Naive thymus-derived CD4-positive, alpha-beta T cell (primary cell): ENCODE measurements at regions of chr10 and their contacts with region 1.

Region 1: GRCh38 chr10:59906417-59907202 is at the start of gene CCDC6:
- DNase-seq: peak; percentile 87 to 92 (median 91)
- ATAC-seq: peak; percentile 92
- H3K4me3 ChIP-seq: peak within 1 kb of the TSS; percentile 72
- H3K4me3 Mint-ChIP-seq: peak within 1 kb of the TSS; percentile 91 to 99 (median 96)
- H3K27ac ChIP-seq: peak within 1 kb of the TSS; percentile 85
- H3K27ac Mint-ChIP-seq: peak within 1 kb of the TSS; percentile 92 to 98 (median 97)
- H3K4me1 ChIP-seq: peaks cover 22 to 36% of the 10 kb centered on the region in 2 donors
- H3K4me1 Mint-ChIP-seq: peaks cover 47 to 71% (median 64%) of the 10 kb centered on the region in 7 donors
- H3K27me3 ChIP-seq: no peaks in the 10 kb centered on the region
- H3K27me3 Mint-ChIP-seq: no peaks in the 10 kb centered on the region
- total RNA-seq, gene CCDC6: 19.7 to 34.3 (median 21.4) TPM

Region 2: GRCh38 chr10:58268870-58269605 is 1637.6 kb before region 1 on chr10 and contains the start of gene CISD1:
- CTCF ChIA-PET with region 1: no interaction called
- POLR2A ChIA-PET with region 1: interaction called, 7 read pairs
- intact Hi-C with region 1: loop called (anchors 1 to 10 kb)
- DNase-seq: peak; percentile 84 to 96 (median 95)
- ATAC-seq: peak; percentile 69
- H3K4me3 ChIP-seq: peak within 1 kb of the TSS; percentile 73
- H3K4me3 Mint-ChIP-seq: peak within 1 kb of the TSS; percentile 89 to 99 (median 98)
- H3K27ac ChIP-seq: peak within 1 kb of the TSS; percentile 77
- H3K27ac Mint-ChIP-seq: peak within 1 kb of the TSS; percentile 91 to 97 (median 96)
- H3K4me1 ChIP-seq: peaks cover 18 to 20% of the 10 kb centered on the region in 2 donors
- H3K4me1 Mint-ChIP-seq: peaks cover 11 to 50% (median 40%) of the 10 kb centered on the region in 7 donors
- H3K27me3 ChIP-seq: no peaks in the 10 kb centered on the region
- H3K27me3 Mint-ChIP-seq: peaks cover 0 to 2% (median 0%) of the 10 kb centered on the region in 5 donors
- total RNA-seq, gene CISD1: 5.1 to 45.7 (median 9.2) TPM

Region 3: DNA sequence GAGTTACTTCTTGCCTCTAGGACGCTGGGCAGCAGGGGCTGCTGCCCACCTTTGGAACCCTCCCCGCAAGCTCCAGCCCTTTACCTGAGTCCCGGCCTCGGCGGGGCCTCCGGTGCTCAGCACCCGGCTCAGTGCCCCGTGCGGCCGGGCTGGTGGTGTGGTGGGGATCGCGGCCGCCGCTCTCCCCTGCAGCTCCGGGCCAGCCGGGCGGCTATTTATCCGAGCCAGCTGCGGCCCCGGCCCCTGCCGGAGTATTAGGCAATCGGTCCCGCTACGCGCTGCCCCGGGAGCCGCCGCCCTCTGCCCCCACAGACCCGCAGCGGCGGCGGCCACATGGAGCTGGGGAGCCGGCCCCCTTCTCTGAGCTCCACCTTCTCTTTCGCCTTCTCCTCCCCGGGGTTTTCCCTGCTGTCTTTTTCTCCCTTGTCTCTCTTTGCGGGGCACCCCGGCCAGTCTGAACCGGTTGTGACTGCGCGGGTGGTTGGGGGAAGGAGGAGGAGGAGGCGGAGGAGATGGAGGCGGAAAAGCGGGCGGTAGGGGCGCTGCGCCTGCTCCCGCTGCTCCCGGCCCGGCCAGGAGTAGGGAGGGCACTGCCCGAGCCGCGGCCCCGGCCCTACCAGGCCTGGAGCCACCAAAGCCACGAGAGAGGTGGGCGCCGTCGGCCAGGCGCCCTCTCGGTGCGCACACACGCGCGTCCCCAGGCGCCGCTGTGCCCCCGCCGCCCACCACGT is 197.1 kb before region 1 on chr10 and contains the start of gene SLC16A9:
- CTCF ChIA-PET with region 1: no interaction called
- POLR2A ChIA-PET with region 1: no interaction called
- intact Hi-C with region 1: loop called in 1 of 2 experiments (anchors 1 kb)
- DNase-seq: peak in 2 of 9 donors; percentile 1 to 75
- ATAC-seq: peak; percentile 60
- H3K4me3 ChIP-seq: no peak within 1 kb of the TSS
- H3K4me3 Mint-ChIP-seq: peak within 1 kb of the TSS in 8 of 10 donors; percentile 2 to 86 (median 48)
- H3K27ac ChIP-seq: no peak within 1 kb of the TSS
- H3K27ac Mint-ChIP-seq: peak within 1 kb of the TSS in 1 of 9 donors; percentile 34
- H3K4me1 ChIP-seq: no peaks in the 10 kb centered on the region
- H3K4me1 Mint-ChIP-seq: peaks cover 0 to 13% (median 0%) of the 10 kb centered on the region in 7 donors
- H3K27me3 ChIP-seq: no peaks in the 10 kb centered on the region
- H3K27me3 Mint-ChIP-seq: peaks cover 67 to 77% (median 70%) of the 10 kb centered on the region in 5 donors
- total RNA-seq, gene SLC16A9: 1.5 TPM in 1 of 5 experiments, not detected in the others

Region 4: GRCh38 chr10:59865101-59865500 is 41.5 kb before region 1 on chr10:
- CTCF ChIA-PET with region 1: no interaction called
- POLR2A ChIA-PET with region 1: interaction called, 4 read pairs
- intact Hi-C with region 1: loop called (anchors 1 kb)
- DNase-seq: peak in 5 of 9 donors; percentile 9 to 27 (median 16)
- ATAC-seq: peak; percentile 59
- H3K4me3 ChIP-seq: no peak overlapping the region
- H3K4me3 Mint-ChIP-seq: peak overlapping the region in 9 of 10 donors; percentile 1 to 60 (median 41)
- H3K27ac ChIP-seq: no peak overlapping the region
- H3K27ac Mint-ChIP-seq: peak overlapping the region in 8 of 9 donors; percentile 0 to 77 (median 58)
- H3K4me1 ChIP-seq: peaks cover 4 to 14% of the 10 kb centered on the region in 2 donors
- H3K4me1 Mint-ChIP-seq: peaks cover 41 to 80% (median 64%) of the 10 kb centered on the region in 7 donors
- H3K27me3 ChIP-seq: no peaks in the 10 kb centered on the region
- H3K27me3 Mint-ChIP-seq: no peaks in the 10 kb centered on the region

Region 5: GRCh38 chr10:60000747-60001146 is 94.1 kb after region 1 on chr10:
- CTCF ChIA-PET with region 1: no interaction called
- POLR2A ChIA-PET with region 1: no interaction called
- intact Hi-C with region 1: loop called in 1 of 2 experiments (anchors 2 kb)
- DNase-seq: no peak
- ATAC-seq: no peak
- H3K4me3 ChIP-seq: no peak overlapping the region
- H3K4me3 Mint-ChIP-seq: peak overlapping the region in 1 of 10 donors; percentile 33
- H3K27ac ChIP-seq: no peak overlapping the region
- H3K27ac Mint-ChIP-seq: peak overlapping the region in 2 of 9 donors; percentile 10 to 86
- H3K4me1 ChIP-seq: no peaks in the 10 kb centered on the region
- H3K4me1 Mint-ChIP-seq: peaks cover 0 to 23% (median 1%) of the 10 kb centered on the region in 7 donors
- H3K27me3 ChIP-seq: no peaks in the 10 kb centered on the region
- H3K27me3 Mint-ChIP-seq: peaks cover 0 to 13% (median 0%) of the 10 kb centered on the region in 5 donors

Region 6: GRCh38 chr10:60778214-60779029 is 871.8 kb after region 1 on chr10 and contains the start of gene CDK1:
- CTCF ChIA-PET with region 1: no interaction called
- POLR2A ChIA-PET with region 1: no interaction called
- intact Hi-C with region 1: loop called (anchors 1 to 2 kb)
- DNase-seq: peak; percentile 80 to 96 (median 92)
- ATAC-seq: peak; percentile 99
- H3K4me3 ChIP-seq: peak within 1 kb of the TSS; percentile 80
- H3K4me3 Mint-ChIP-seq: peak within 1 kb of the TSS; percentile 93 to 98 (median 96)
- H3K27ac ChIP-seq: peak within 1 kb of the TSS; percentile 55
- H3K27ac Mint-ChIP-seq: peak within 1 kb of the TSS; percentile 1 to 97 (median 80)
- H3K4me1 ChIP-seq: no peaks in the 10 kb centered on the region
- H3K4me1 Mint-ChIP-seq: peaks cover 6 to 40% (median 15%) of the 10 kb centered on the region in 7 donors
- H3K27me3 ChIP-seq: no peaks in the 10 kb centered on the region
- H3K27me3 Mint-ChIP-seq: peaks cover 0 to 3% (median 0%) of the 10 kb centered on the region in 5 donors
- total RNA-seq, gene CDK1: 0.50 to 90.7 (median 1.1) TPM